GM23248 (cell line): ENCODE measurements at regions of chr1 and their contacts with region 1.

Region 1: GRCh38 chr1:180154325-180155181 is at the start of gene QSOX1:
- DNase-seq: peak; percentile 97
- H3K4me3 ChIP-seq: peak within 1 kb of the TSS; percentile 89
- H3K27ac ChIP-seq: peak within 1 kb of the TSS; percentile 80
- H3K4me1 ChIP-seq: peaks cover 52% of the 10 kb centered on the region
- H3K27me3 ChIP-seq: no peaks in the 10 kb centered on the region
- total RNA-seq, gene QSOX1: 519 and 540 TPM in 2 replicates

Region 2: GRCh38 chr1:179882243-179883039 is 272.1 kb before region 1 on chr1 and contains the start of gene TOR1AIP1:
- in situ Hi-C with region 1: loop called (anchors 25 kb)
- DNase-seq: peak; percentile 99
- H3K4me3 ChIP-seq: peak within 1 kb of the TSS; percentile 90
- H3K27ac ChIP-seq: peak within 1 kb of the TSS; percentile 99
- H3K4me1 ChIP-seq: peaks cover 17% of the 10 kb centered on the region
- H3K27me3 ChIP-seq: no peaks in the 10 kb centered on the region
- total RNA-seq, gene TOR1AIP1: 48.8 and 64.6 TPM in 2 replicates

Region 3: DNA sequence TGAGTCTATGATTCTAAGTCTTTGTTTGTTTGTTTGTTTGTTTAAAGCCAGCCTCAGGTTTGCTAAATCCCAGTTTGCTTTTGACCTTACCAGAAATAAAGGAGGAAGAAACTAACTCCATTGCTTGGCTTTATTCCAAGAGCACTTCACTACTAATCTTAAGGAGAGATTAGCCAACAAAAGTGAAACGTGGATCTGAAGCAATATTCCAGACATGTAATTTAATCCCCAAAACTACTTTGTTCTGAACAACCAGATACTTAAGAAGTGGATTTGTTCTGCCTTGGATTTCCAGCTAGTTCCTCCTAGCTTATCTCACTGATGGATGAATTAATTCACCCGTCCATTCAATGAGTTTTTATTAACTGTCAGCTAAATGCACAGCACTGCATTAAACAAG is 215.8 kb before region 1 on chr1:
- in situ Hi-C with region 1: no loop called
- DNase-seq: peak; percentile 16
- H3K4me3 ChIP-seq: no peak overlapping the region
- H3K27ac ChIP-seq: no peak overlapping the region
- H3K4me1 ChIP-seq: no peaks in the 10 kb centered on the region
- H3K27me3 ChIP-seq: no peaks in the 10 kb centered on the region

Region 4: DNA sequence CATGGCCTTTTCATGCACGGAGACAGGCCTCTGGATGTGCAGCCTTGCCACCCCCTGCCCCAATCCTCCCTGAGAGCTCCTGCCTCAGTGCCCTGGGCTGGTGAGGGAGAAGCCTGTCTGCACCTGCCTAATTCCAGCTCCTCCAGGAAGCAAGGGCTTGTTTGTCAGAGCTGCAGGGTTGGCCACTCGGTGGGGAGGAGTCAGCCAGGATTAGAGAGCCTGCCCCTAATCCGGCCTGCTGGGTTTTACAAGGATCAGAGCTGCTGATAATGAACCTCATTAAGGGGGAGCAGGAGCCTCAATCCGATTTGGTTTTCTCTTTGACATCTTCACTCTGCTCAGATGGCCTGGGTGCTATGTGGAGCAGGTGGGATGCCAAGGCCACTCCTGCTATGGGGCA is 43.6 kb after region 1 on chr1:
- in situ Hi-C with region 1: no loop called
- DNase-seq: no peak
- H3K4me3 ChIP-seq: no peak overlapping the region
- H3K27ac ChIP-seq: no peak overlapping the region
- H3K4me1 ChIP-seq: no peaks in the 10 kb centered on the region
- H3K27me3 ChIP-seq: no peaks in the 10 kb centered on the region

Region 5: GRCh38 chr1:180229152-180229973 is 74.8 kb after region 1 on chr1:
- in situ Hi-C with region 1: no loop called
- DNase-seq: peak; percentile 49
- H3K4me3 ChIP-seq: peak overlapping the region; percentile 63
- H3K27ac ChIP-seq: no peak overlapping the region
- H3K4me1 ChIP-seq: no peaks in the 10 kb centered on the region
- H3K27me3 ChIP-seq: peaks cover 85% of the 10 kb centered on the region

Region 6: DNA sequence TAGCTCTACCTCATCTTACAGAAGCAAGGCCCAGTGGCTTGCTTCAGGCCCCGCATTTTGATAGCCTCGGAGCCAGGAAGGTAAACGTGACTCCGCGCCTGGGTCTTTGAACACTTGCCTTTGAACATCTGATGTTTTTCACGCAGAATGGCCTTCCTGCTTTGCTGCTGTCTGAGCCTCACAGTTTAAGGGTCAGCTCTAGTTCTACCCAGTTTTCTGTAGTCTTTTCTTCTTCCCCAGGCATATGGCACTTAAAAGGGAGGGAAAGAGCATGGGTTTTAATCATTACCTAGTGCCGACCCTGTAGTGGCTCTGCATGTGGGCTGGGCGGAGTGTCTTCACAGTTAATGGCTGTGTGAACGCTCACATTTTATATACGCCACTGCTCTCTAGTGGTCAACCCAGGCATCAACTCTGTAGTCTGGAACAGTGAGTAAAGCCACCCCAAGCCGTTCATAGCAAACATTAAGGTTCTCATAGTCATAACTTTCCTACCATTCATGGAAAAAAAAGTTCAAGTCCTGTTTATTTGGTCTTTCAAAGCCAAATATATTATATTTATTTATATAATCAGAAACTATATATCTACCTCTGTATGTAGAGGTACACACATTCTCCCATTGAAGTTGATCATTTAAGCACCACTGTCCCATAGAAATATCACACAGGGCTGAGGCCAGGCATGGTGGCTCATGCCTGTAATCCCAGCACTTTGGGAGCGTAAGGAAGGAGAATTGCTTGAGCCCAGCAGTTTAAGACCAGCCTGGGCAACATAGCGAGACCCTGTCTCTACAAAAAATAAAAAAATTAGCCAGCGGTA is 1012.0 kb after region 1 on chr1:
- in situ Hi-C with region 1: no loop called
- DNase-seq: peak; percentile 87
- H3K4me3 ChIP-seq: no peak overlapping the region
- H3K27ac ChIP-seq: no peak overlapping the region
- H3K4me1 ChIP-seq: no peaks in the 10 kb centered on the region
- H3K27me3 ChIP-seq: no peaks in the 10 kb centered on the region